PC-3 (cell line): ENCODE measurements at regions of chr1 and their contacts with region 1.

Region 1: DNA sequence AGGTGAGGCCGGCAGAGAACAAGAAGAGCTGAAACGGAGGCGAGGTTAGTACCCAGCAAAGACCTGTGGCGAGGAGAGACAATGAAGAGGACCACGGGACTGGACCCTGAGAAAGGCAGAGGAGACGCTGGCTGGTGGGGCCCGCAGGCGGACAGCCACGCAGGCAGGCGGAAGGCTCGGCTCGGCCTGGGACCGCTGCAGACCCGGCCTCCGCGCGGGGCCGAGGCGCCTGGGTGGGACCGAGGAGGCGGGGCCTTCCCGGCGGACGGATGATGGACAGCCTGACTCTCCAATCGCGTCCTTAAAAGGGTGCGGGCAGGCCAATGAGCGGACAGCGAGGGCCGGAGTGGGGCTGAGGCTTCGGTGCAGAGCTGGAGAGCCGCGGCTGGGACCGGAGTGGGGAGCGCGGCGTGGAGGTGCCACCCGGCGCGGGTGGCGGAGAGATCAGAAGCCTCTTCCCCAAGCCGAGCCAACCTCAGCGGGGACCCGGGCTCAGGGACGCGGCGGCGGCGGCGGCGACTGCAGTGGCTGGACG is at the start of gene MPZL1:
- DNase-seq: peak; percentile 98
- ATAC-seq: peak; percentile 94
- H3K4me3 ChIP-seq: peak within 1 kb of the TSS; percentile 76
- H3K27ac ChIP-seq: peak within 1 kb of the TSS; percentile 35
- H3K4me1 ChIP-seq: peaks cover 24% of the 10 kb centered on the region
- H3K27me3 ChIP-seq: no peaks in the 10 kb centered on the region
- CTCF ChIP-seq: no peak
- total RNA-seq, gene MPZL1: 86.5 and 95.1 TPM in 2 replicates

Region 2: DNA sequence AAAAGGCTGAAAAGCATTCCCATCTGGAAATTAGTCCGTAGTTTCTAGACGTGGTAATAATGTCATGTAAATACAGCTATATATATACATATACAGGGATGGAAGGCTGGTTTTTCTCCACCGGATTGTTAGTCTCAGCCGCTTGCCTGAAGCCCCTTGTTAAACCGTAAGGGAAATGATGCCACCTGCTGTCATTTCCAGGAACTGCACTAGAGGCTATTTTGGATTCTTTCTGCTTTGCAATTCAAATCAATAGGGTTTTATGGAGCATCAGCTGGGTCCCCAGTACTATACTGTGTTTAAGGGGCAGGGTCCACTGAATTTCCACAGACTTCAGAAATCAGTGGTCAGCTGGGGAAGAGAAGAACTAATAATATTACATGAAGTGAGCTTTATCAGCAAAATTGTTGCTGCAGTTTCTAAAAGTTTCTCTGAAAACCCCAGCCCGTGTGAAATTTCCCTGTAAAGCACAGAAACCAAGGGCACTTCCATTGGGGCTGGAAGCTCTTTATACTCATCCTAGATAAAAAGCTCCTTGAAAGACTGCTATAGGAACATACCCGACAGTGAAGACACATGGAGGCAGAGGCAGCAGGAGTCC is 33.7 kb before region 1 on chr1:
- CTCF ChIA-PET with region 1: no interaction called
- POLR2A ChIA-PET with region 1: no interaction called
- intact Hi-C with region 1: no loop called
- DNase-seq: peak; percentile 97
- ATAC-seq: peak; percentile 56
- H3K4me3 ChIP-seq: no peak overlapping the region
- H3K27ac ChIP-seq: no peak overlapping the region
- H3K4me1 ChIP-seq: peaks cover 13% of the 10 kb centered on the region; the same call in 1 of the 2 replicates
- H3K27me3 ChIP-seq: 0 out of 2 replicates have a peak, but pooled peaks cover 8% of the 10 kb centered on the region
- CTCF ChIP-seq: peak; percentile 96

Region 3: DNA sequence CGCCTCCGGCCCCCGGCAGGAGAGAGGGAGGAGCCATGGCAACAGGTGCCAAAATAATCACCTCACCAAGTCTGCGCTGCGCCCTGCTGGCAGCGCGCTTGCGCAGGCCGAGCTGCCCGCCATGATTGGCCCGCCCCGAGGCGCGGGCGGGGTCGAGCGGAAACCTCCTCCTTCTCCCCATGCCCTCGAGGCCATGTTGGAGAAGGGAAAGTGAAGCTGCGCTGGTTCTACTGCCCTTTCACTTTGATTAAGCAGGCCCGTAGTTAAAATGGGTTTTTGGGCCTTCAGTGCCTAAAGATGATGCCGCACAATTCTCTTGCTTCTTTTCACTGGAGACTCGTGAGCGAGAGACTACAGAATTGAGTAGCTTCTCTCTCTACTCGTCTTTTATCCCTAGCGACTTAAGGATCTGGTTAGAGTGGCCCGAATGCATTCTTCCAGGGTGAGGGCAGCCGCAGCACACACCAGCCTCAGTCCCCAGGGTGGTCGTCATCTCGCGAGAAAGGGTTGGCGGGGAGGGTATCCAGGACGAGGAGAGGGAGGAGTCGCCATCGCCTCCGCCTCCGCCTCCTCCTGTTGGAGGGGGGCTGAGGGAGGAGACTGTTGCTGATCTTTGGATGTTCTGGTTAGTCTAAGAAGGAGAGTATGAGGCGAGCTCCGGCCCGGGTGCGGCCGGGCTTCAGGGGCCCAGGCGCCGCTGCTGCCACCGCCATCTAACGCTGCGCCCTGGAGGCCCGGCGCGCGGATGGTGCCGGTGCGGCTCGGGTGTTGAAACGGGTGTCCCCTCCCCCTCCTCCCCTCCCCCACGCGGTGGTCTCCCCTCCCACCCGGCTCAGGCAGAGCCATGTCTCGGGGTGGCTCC is 214.6 kb after region 1 on chr1 and contains the start of gene DCAF6:
- CTCF ChIA-PET with region 1: interaction called, 3 read pairs
- POLR2A ChIA-PET with region 1: no interaction called
- intact Hi-C with region 1: loop called (anchors 1 kb)
- DNase-seq: peak; percentile 100
- ATAC-seq: peak; percentile 71
- H3K4me3 ChIP-seq: peak within 1 kb of the TSS; percentile 79
- H3K27ac ChIP-seq: peak within 1 kb of the TSS; percentile 88
- H3K4me1 ChIP-seq: peaks cover 22% of the 10 kb centered on the region
- H3K27me3 ChIP-seq: no peaks in the 10 kb centered on the region
- CTCF ChIP-seq: no peak
- total RNA-seq, gene DCAF6: 29.1 and 52.2 TPM in 2 replicates